MCF 10A (cell line): ENCODE measurements at regions of chr6 and their contacts with region 1.

Region 1: DNA sequence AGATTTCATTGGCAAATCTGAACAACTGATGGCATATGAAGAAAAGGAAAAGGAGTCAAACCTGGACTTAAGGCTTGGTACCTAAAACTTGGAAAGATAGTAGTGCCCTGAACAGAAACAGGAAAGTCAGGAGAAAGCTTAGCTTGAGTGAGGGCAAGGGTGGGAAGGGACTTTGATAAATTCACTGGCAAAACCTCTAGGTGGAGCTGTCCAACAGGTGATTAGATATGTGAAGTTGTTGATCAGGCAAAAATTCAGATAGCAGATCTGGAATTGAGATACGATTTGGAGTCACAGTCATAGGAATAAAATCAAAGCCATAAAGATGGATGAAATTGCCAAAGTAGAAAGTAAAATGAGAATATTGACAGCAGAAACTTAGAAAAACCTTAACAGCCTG is 16.1 kb upstream of the ZNF292 start:
- DNase-seq: peak; percentile 65
- H3K4me3 Mint-ChIP-seq: no peak overlapping the region
- H3K27ac Mint-ChIP-seq: no peak overlapping the region
- H3K4me1 Mint-ChIP-seq: peaks cover 6% of the 10 kb centered on the region
- H3K27me3 Mint-ChIP-seq: peaks cover 55% of the 10 kb centered on the region
- CTCF ChIP-seq: peak; percentile 72

Region 2: DNA sequence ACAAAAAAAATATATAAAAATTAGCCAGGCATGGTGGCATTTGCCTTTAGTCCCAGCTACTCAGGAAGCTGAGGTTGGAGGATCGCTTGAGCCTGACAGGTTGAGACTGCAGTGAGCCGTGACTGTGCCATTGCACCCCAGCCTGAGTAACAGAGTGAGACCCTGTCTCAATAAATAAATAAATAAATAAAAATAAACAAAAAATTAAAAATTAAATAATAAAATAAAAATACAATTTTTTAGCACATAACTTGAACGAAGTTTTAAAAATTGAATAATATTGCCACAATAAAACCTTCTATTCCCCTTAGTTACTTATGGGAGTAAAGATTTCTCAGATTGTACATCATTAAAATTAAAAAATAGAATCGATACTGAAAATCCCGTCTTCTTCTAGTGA is 15.2 kb before region 1 on chr6:
- CTCF ChIA-PET with region 1: interaction called, 14 read pairs
- POLR2A ChIA-PET with region 1: no interaction called
- intact Hi-C with region 1: no loop called
- DNase-seq: no peak
- H3K4me3 Mint-ChIP-seq: no peak overlapping the region
- H3K27ac Mint-ChIP-seq: no peak overlapping the region
- H3K4me1 Mint-ChIP-seq: no peaks in the 10 kb centered on the region
- H3K27me3 Mint-ChIP-seq: peaks cover 20% of the 10 kb centered on the region
- CTCF ChIP-seq: no peak

Region 3: GRCh38 chr6:87237804-87238203 is 98.6 kb after region 1 on chr6:
- CTCF ChIA-PET with region 1: interaction called, 34 read pairs
- POLR2A ChIA-PET with region 1: no interaction called
- intact Hi-C with region 1: loop called (anchors 1 kb)
- DNase-seq: peak; percentile 31
- H3K4me3 Mint-ChIP-seq: no peak overlapping the region
- H3K27ac Mint-ChIP-seq: no peak overlapping the region
- H3K4me1 Mint-ChIP-seq: no peaks in the 10 kb centered on the region
- H3K27me3 Mint-ChIP-seq: no peaks in the 10 kb centered on the region
- CTCF ChIP-seq: peak; percentile 46

Region 4: DNA sequence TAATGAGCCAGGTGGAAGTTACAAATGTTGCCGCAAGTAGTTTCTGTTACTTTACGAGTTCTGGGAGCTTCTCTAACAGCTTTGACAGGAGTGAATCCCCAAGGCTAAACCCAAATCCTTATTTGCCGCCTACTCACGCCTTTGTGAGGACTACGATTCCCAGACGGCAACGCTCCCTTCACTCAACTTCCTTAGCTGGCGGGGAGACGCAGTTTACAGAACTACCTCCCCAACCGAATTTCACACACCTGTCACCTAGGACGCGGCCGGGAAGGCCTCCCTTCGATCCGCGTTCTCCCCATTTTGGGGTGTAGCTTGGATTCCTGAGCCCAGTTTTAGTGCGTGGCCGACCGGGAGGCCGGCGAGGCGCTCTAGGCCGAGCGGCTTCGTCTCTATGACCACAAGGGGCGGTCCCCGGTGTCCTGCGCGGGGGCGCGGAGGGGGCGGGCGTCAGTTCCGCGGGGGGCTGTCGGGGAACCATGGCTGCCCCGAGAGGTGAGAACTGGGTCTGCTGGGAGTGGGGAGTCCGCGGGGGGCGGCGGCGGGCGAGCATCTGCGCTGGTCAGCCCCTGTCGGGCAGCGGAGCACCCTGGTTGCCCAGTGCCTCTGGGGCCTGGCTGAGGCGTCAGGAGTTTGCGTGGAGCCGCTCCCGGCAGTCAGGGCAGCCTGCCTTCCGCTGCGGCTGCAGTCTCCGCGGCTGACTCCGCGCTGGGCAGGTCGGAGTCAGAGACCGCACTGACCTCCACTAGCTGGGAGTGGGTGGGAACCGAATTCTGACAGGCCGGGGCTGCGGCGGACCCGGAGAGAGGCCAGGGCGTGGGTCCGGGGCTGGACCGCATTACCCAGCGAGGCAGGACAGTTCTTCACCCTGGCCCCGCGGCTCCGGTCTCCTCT is 333.5 kb after region 1 on chr6 and contains the start of gene SLC35A1:
- CTCF ChIA-PET with region 1: interaction called, 3 read pairs
- POLR2A ChIA-PET with region 1: no interaction called
- intact Hi-C with region 1: loop called (anchors 10 kb)
- DNase-seq: peak; percentile 75
- H3K4me3 Mint-ChIP-seq: peak within 1 kb of the TSS; percentile 93
- H3K27ac Mint-ChIP-seq: peak within 1 kb of the TSS; percentile 98
- H3K4me1 Mint-ChIP-seq: peaks cover 8% of the 10 kb centered on the region
- H3K27me3 Mint-ChIP-seq: peaks cover 7% of the 10 kb centered on the region
- CTCF ChIP-seq: no peak
- total RNA-seq, gene SLC35A1: 10.3 and 12.1 TPM in 2 replicates